ENCODE measurements at regions of chr1 and their contacts with region 1.

Region 1: DNA sequence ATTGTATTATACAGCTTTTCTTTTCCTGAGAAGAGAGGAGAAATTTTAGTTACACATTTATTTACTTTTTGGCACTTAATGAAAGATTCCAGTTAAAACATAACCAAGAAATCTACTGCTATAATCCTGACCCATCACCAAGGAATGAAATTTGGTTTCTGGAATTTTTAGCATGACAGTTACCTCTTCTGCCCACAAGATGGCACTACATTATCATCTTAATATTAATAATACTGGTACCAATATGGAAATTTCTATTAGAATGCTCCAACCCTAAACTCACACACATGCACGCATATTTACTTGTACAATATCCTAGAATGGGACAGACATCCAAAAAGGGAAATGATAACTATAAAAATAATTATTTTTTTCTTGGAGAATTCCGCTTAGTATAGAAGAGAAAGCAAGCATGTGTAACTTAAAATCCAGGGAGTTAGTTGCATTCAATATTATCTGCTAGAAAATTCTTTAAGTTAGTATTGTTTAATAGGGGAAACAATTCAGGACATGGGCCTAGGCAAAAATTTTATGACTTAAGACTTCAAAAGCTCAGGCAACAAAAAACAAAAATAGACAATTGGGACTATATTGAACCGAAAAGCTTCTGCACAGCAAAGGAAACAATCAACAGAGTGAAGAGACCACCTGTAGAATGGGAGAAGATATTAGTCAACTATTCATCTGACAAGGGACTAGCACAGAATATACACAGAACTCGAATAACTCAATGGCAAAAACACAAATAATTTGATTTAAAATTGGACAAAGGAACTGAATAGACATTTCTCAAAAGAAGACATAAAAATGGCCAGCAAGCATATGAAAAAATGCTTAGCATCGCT is 37.4 kb downstream of the MAP3K21 start:
- DNase-seq: peak in 1 of 2 experiments; percentile 15
- H3K4me3 ChIP-seq: no peak overlapping the region
- H3K4me3 Mint-ChIP-seq: no peak overlapping the region
- H3K27ac Mint-ChIP-seq: no peak overlapping the region
- H3K4me1 ChIP-seq: peaks cover 29% of the 10 kb centered on the region
- H3K4me1 Mint-ChIP-seq: peaks cover 38% of the 10 kb centered on the region
- H3K27me3 ChIP-seq: no peaks in the 10 kb centered on the region
- H3K27me3 Mint-ChIP-seq: no peaks in the 10 kb centered on the region
- CTCF ChIP-seq: peak; percentile 56 to 72

Region 2: DNA sequence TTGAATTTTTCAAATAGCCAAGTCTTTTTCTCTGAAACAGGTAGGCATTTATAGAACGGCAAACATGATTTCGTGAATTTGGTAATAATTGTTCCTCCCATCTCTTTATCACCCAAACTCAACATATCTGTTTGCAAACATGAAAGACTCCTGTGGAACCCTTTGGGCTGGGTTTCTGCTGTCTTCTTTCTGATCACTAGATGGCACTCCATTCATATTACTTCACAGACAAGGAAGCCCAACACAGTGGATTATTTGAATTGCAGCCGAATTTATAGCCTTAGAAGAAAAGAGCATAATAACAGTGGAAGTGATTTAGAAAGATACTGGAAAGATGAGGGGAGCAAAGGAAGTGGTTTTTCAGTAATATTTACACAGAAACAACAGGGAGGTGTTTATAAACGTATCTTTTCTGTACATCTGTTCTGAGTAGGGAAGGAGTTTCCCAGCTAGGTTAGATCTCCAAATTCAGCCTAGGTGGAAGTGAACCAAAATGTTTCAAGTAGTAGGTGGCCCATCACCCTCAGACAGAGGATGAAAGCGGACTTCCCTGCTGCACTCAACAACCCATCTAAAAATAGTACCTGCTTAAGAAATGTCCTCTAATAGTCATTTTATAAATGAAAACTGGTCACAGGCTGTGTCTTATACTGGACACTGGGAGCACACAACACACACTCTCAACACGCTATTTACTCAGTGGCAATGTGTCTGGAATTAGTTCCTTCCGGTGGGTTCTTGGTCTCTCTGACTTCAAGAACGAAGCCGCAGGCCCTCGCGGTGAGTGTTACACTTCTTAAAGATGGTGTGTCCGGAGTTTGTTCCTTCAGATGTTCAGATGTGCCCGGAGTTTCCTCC is 30.2 kb after region 1 on chr1:
- CTCF ChIA-PET with region 1: interaction called, 5 read pairs
- POLR2A ChIA-PET with region 1: no interaction called
- intact Hi-C with region 1: loop called (anchors 1 kb)
- DNase-seq: peak in 1 of 2 experiments; percentile 60
- H3K4me3 ChIP-seq: no peak overlapping the region
- H3K4me3 Mint-ChIP-seq: no peak overlapping the region
- H3K27ac Mint-ChIP-seq: no peak overlapping the region
- H3K4me1 ChIP-seq: peaks cover 9% of the 10 kb centered on the region; the same call in 1 of the 2 replicates
- H3K4me1 Mint-ChIP-seq: peaks cover 15% of the 10 kb centered on the region
- H3K27me3 ChIP-seq: no peaks in the 10 kb centered on the region
- H3K27me3 Mint-ChIP-seq: no peaks in the 10 kb centered on the region
- CTCF ChIP-seq: peak; percentile 75 to 76

Region 3: DNA sequence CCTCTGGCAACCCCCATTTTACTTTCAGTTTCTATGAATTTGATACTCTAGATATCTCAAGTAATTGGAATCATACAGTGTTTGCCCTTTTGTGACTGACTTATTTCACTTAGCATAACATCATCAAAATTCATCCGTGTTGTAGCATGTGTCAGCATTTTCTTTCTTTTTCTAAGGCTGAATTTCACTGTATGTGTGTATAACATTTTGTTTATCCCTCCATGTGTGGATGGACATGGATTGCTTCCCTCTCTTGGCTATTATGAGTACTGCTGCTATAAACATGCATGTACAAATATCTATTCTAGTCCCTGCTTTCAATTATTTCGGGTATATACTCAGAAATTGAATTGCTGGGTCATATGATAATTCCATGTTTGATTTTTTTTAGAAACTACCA is 59.9 kb after region 1 on chr1:
- CTCF ChIA-PET with region 1: no interaction called
- POLR2A ChIA-PET with region 1: no interaction called
- intact Hi-C with region 1: loop called (anchors 2 kb)
- DNase-seq: no peak
- H3K4me3 ChIP-seq: no peak overlapping the region
- H3K4me3 Mint-ChIP-seq: no peak overlapping the region
- H3K27ac Mint-ChIP-seq: no peak overlapping the region
- H3K4me1 ChIP-seq: 0 out of 2 replicates have a peak, but pooled peaks cover 3% of the 10 kb centered on the region
- H3K4me1 Mint-ChIP-seq: no peaks in the 10 kb centered on the region
- H3K27me3 ChIP-seq: no peaks in the 10 kb centered on the region
- H3K27me3 Mint-ChIP-seq: peaks cover 22% of the 10 kb centered on the region
- CTCF ChIP-seq: peak; percentile 12 to 21

Region 4: GRCh38 chr1:233582439-233582838 is 217.5 kb after region 1 on chr1:
- CTCF ChIA-PET with region 1: no interaction called
- POLR2A ChIA-PET with region 1: no interaction called
- intact Hi-C with region 1: no loop called
- DNase-seq: no peak
- H3K4me3 ChIP-seq: no peak overlapping the region
- H3K4me3 Mint-ChIP-seq: no peak overlapping the region
- H3K27ac Mint-ChIP-seq: no peak overlapping the region
- H3K4me1 ChIP-seq: no peaks in the 10 kb centered on the region
- H3K4me1 Mint-ChIP-seq: no peaks in the 10 kb centered on the region
- H3K27me3 ChIP-seq: no peaks in the 10 kb centered on the region
- H3K27me3 Mint-ChIP-seq: peaks cover 9% of the 10 kb centered on the region
- CTCF ChIP-seq: no peak

Region 5: GRCh38 chr1:233613252-233614174 is 248.6 kb after region 1 on chr1 and contains the start of gene KCNK1:
- CTCF ChIA-PET with region 1: no interaction called
- POLR2A ChIA-PET with region 1: no interaction called
- intact Hi-C with region 1: no loop called
- DNase-seq: peak; percentile 42 to 54
- H3K4me3 ChIP-seq: peak within 1 kb of the TSS; percentile 36
- H3K4me3 Mint-ChIP-seq: peak within 1 kb of the TSS; percentile 83
- H3K27ac Mint-ChIP-seq: no peak within 1 kb of the TSS
- H3K4me1 ChIP-seq: peaks cover 4% of the 10 kb centered on the region; the same call in 1 of the 2 replicates
- H3K4me1 Mint-ChIP-seq: no peaks in the 10 kb centered on the region
- H3K27me3 ChIP-seq: peaks cover 2% of the 10 kb centered on the region
- H3K27me3 Mint-ChIP-seq: peaks cover 31% of the 10 kb centered on the region
- CTCF ChIP-seq: no peak
- total RNA-seq, gene KCNK1: 0.60 TPM in 1 of 2 replicates, not detected in the other

Region 6: DNA sequence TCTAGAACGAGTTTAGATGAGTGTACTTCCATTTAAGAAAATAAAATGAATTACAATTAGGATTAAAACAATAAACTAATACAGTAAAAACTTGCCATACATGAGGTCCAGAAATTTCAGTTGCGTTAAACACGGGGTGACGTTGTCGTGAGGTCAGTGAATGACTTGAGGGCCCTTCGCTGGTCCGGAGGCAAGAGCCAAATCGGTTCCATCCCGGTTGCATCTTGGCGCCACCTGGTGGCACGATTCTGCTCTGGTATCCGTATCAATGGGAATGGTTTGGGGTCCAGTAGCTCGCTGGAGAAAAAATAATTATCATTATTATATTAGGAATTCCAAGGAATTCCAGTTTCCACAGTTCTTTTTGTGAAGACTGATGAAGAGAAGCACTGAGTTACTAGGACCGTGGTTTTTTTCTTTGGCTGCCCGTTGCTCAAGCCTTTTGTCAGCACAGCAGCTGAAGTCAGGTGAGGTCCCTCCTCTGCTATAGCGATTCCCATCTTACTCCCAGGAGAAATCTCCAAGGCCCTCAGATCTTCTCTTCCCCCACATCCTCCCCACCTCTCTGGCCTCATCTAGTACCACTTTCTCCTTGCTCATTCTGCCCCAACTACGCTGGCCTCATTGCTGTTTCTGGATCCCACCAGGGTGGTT is 701.0 kb after region 1 on chr1:
- CTCF ChIA-PET with region 1: no interaction called
- POLR2A ChIA-PET with region 1: no interaction called
- intact Hi-C with region 1: loop called (anchors 1 kb)
- DNase-seq: peak; percentile 71 to 79
- H3K4me3 ChIP-seq: no peak overlapping the region
- H3K4me3 Mint-ChIP-seq: no peak overlapping the region
- H3K27ac Mint-ChIP-seq: no peak overlapping the region
- H3K4me1 ChIP-seq: no peaks in the 10 kb centered on the region
- H3K4me1 Mint-ChIP-seq: no peaks in the 10 kb centered on the region
- H3K27me3 ChIP-seq: no peaks in the 10 kb centered on the region
- H3K27me3 Mint-ChIP-seq: peaks cover 2% of the 10 kb centered on the region
- CTCF ChIP-seq: peak; percentile 82 to 91

Measured in Caco-2 (cell line).